ENCODE measurements at regions of chr11 and their contacts with region 1.

Region 1: DNA sequence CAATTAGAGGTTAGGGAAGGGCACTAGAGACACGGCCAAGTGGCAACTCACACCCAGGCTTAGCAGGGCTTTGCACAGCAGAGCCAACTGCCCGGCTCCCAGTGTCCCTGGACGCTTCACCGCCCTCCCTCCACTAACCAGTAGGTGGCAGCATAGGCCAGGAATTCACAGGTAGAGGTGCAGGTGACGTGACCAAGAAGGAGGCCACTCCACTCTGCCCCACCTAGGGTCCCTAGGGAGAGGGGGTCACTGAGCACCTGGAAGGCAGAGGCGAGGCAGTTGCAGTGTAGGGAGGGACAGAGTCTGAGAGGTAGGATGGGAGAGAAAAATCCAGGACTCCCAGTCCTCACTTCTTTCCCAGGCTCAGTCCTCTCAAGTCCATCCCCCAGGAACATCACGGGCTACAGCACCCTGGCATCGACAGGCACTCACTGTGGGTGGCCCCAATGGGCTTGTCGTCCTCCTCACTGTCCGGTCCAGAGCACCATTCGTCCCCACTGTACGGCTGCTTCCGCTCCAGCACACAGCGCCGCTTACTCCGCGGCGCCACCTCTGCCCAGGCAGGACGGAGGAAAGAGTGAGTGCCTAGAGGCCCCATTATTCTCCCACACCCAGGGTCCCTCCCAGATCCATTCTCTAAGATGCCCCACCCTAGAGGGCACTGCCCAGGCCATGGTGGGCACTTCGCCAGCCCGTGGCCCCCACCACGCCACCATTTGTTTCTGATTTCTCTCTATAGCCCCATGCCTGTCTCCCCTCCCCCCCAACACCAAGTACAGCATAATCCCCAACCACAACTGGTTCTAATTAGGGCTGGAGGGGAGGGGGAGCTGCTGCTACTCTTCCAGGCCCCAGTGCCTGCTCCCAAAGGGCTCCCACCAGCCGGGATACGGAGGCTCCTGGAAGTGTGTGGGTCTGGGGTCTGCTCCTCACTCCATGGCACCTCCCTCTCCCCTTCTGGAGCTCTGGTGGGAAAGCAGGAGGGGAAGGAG is 18.4 kb downstream of the BCL9L start:
- DNase-seq: peak; percentile 87
- H3K4me3 ChIP-seq: no peak overlapping the region
- H3K27ac ChIP-seq: peak overlapping the region; percentile 92 to 97
- H3K4me1 ChIP-seq: peaks cover 35% of the 10 kb centered on the region
- H3K27me3 ChIP-seq: no peaks in the 10 kb centered on the region
- CTCF ChIP-seq: peak; percentile 94 to 98 (median 96)
- POLR2A ChIP-seq: no peak

Region 2: GRCh38 chr11:118924591-118925585 is 17.5 kb after region 1 on chr11:
- intact Hi-C with region 1: loop called (anchors 1 kb)
- DNase-seq: no peak
- H3K4me3 ChIP-seq: peak overlapping the region; percentile 97
- H3K27ac ChIP-seq: peak overlapping the region; percentile 92 to 97
- H3K4me1 ChIP-seq: peaks cover 40% of the 10 kb centered on the region
- H3K27me3 ChIP-seq: no peaks in the 10 kb centered on the region
- CTCF ChIP-seq: no peak
- POLR2A ChIP-seq: peak; percentile 50

Region 3: GRCh38 chr11:118930094-118930712 is 22.9 kb after region 1 on chr11:
- intact Hi-C with region 1: loop called (anchors 1 kb)
- DNase-seq: peak; percentile 95
- H3K4me3 ChIP-seq: peak overlapping the region; percentile 67 to 77
- H3K27ac ChIP-seq: peak overlapping the region; percentile 100
- H3K4me1 ChIP-seq: peaks cover 7% of the 10 kb centered on the region
- H3K27me3 ChIP-seq: no peaks in the 10 kb centered on the region
- CTCF ChIP-seq: peak; percentile 96 to 100 (median 99)
- POLR2A ChIP-seq: peak; percentile 50

Region 4: DNA sequence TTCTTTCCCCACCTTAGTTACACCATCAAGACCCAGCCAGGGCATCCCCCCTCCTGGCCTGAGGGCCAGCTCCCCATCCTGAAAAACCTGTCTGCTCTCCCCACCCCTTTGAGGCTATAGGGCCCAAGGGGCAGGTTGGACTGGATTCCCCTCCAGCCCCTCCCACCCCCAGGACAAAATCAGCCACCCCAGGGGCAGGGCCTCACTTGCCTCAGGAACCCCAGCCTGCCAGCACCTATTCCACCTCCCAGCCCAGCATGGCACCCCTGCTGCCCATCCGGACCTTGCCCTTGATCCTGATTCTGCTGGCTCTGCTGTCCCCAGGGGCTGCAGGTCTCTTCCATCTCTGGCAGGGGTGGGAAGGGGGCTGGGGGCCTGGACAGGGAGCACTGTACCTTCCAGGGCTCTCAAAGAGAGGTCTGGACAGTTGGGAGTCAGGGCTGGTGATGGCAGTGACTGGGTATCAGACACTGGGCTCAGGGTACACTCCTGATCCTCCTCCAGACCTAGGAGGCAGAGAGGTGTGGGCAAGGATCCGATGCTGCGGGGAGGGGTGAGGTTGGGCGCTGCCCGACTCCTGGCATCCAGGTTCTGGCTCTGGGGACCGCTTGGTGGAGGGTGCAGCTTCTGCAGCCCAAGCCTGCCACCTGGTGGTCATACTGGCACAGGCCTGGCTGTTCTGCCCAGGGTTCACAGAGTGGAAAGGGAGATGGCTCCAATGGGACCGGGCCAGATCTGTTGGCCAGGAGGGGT is 48.9 kb after region 1 on chr11 and contains the start of gene UPK2:
- intact Hi-C with region 1: loop called (anchors 2 kb)
- DNase-seq: peak; percentile 83
- H3K4me3 ChIP-seq: no peak within 1 kb of the TSS
- H3K27ac ChIP-seq: no peak within 1 kb of the TSS
- H3K4me1 ChIP-seq: no peaks in the 10 kb centered on the region
- H3K27me3 ChIP-seq: no peaks in the 10 kb centered on the region
- CTCF ChIP-seq: peak; percentile 88 to 99 (median 96)
- POLR2A ChIP-seq: no peak
- total RNA-seq, gene UPK2: not detected

Measured in prostate gland (tissue), 2 donors.